Prostate gland (tissue), 2 donors: ENCODE measurements at regions of chr6 and their contacts with region 1.

Region 1: DNA sequence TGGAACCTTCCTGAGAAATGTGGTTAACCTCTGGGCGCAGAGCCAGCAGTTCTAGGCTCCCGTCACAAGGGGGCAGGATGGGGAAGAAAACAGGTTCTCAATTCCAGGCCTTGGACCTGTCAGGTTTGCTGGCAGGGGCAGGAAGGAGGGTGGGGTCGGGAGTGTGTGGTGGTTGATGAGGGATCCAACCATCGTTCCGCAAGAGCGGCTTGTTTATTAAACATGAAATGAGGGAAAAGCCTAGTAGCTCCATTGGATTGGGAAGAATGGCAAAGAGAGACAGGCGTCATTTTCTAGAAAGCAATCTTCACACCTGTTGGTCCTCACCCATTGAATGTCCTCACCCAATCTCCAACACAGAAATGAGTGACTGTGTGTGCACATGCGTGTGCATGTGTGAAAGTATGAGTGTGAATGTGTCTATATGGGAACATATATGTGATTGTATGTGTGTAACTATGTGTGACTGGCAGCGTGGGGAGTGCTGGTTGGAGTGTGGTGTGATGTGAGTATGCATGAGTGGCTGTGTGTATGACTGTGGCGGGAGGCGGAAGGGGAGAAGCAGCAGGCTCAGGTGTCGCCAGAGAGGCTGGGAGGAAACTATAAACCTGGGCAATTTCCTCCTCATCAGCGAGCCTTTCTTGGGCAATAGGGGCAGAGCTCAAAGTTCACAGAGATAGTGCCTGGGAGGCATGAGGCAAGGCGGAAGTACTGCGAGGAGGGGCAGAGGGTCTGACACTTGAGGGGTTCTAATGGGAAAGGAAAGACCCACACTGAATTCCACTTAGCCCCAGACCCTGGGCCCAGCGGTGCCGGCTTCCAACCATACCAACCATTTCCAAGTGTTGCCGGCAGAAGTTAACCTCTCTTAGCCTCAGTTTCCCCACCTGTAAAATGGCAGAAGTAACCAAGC is 29.6 kb downstream of the SRSF3 start:
- DNase-seq: peak; percentile 89
- H3K4me3 ChIP-seq: no peak overlapping the region
- H3K27ac ChIP-seq: no peak overlapping the region
- H3K4me1 ChIP-seq: no peaks in the 10 kb centered on the region
- H3K27me3 ChIP-seq: no peaks in the 10 kb centered on the region
- CTCF ChIP-seq: peak; percentile 82 to 94 (median 88)
- POLR2A ChIP-seq: no peak

Region 2: GRCh38 chr6:36533321-36533720 is 90.5 kb before region 1 on chr6:
- intact Hi-C with region 1: no loop called
- DNase-seq: no peak
- H3K4me3 ChIP-seq: no peak overlapping the region
- H3K27ac ChIP-seq: no peak overlapping the region
- H3K4me1 ChIP-seq: no peaks in the 10 kb centered on the region
- H3K27me3 ChIP-seq: no peaks in the 10 kb centered on the region
- CTCF ChIP-seq: no peak
- POLR2A ChIP-seq: no peak

Region 3: DNA sequence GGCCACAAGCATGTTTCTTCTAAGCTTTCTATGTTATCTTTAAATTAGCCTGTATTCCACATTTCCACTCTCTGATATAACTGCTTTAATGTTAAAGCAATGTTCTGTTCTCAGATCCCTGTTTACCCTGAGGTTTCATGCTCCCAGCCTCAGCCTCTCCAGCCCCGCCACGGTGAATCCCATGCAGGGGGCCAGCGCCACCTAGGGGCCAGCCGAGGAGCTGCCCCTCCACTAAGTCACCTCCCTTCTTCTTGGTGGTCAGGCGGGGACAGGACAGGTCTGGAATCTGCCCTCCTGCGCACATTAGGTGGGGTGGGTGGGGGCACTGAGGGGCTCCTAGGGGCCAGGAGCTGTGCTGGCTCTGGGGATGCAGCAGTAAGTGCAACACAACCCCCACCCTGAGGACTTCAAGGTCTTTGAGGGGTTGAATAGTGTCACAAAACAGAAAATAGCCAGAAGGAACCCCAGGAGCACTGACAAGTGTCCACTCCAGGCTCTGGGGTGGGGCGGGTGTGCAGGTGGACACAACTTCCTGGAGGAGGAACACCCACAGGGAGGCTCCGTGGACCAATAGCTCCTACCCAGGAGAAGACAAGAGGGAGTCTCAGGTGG is 135.5 kb after region 1 on chr6:
- intact Hi-C with region 1: loop called (anchors 5 kb)
- DNase-seq: peak; percentile 80
- H3K4me3 ChIP-seq: no peak overlapping the region
- H3K27ac ChIP-seq: no peak overlapping the region
- H3K4me1 ChIP-seq: no peaks in the 10 kb centered on the region
- H3K27me3 ChIP-seq: no peaks in the 10 kb centered on the region
- CTCF ChIP-seq: peak; percentile 92 to 97 (median 94)
- POLR2A ChIP-seq: no peak